ENCODE measurements at regions of chr11 and their contacts with region 1.

Region 1: DNA sequence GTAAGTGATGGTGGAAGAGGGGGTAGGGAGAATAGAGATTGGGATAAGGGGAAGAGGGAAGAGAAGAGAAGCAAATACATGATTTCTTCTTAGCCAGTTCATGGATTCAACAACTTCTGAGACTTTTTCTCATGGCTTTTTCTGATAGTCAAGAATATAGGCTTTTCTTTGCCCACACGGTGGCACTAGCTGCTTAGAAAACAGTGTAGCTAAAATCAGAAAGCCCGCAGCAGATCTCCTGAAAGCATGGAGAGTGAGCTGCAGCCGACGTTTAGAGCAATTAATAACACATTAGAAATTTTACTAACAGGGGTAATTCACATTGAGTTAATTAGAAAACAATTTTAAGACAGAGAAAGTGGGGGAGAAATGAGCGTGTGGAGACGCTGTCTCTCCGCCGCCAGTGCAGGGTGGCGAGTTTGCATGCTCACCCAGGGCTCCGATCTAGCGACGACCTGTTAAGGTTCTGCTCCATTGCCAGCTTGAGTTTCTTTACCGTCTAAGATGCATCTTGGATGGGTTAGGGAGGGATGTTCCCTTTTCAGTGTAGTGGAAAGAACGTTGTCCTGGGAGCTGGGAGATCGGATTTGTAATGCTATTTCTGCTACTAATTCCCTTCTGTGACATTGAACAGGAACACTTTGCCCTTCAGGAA is 3.3 kb upstream of the RAG1 start:
- DNase-seq: peak in 4 of 5 donors; percentile 25 to 54 (median 40)
- ATAC-seq: peak; percentile 58 to 87 (median 76)
- H3K4me3 ChIP-seq: peak overlapping the region in 10 of 12 donors; percentile 11 to 55 (median 46)
- H3K27ac ChIP-seq: no peak overlapping the region
- H3K4me1 ChIP-seq: peaks cover 0 to 7% (median 0%) of the 10 kb centered on the region in 12 donors
- H3K27me3 ChIP-seq: peaks cover 0 to 3% (median 0%) of the 10 kb centered on the region in 9 donors
- CTCF ChIP-seq: peak; percentile 39 to 83 (median 70)
- POLR2A ChIP-seq: no peak

Region 2: DNA sequence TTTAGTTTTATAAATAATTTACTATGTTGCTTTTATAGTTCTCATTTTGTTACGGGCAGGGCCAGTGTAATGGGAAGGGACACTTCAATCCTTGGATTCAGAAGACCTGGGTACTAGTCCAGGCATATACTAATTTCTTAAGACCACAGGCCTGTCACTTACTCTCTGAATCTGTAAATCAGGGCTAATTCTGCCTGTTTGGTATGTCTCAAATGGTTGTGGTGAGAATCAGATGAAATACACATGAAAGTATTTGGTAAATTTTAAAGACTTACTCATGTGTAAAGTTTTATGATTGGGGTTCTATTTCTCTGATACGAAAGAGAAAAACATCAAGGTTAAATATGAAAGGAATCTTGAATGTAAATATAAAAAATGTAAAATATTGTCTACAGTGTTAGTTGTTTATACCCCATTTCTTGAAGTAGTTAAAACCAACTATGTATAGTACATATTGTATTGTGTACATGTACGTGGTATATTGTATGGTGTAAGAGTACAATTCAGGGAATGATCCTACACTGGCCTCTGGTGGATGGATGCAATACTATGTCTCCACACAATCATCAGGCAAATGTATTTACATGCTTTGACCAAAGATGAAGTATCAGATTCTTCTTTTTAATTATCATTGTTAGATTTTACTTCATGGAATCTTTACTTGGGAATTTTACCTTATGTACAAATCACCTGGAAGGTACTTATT is 58.1 kb after region 1 on chr11:
- intact Hi-C with region 1: loop called (anchors 2 to 10 kb)
- DNase-seq: no peak
- ATAC-seq: peak in 2 of 4 donors; percentile 67 to 70
- H3K4me3 ChIP-seq: no peak overlapping the region
- H3K27ac ChIP-seq: no peak overlapping the region
- H3K4me1 ChIP-seq: peaks cover 0 to 25% (median 9%) of the 10 kb centered on the region in 12 donors
- H3K27me3 ChIP-seq: no peaks in the 10 kb centered on the region
- CTCF ChIP-seq: peak; percentile 25 to 66 (median 52)
- POLR2A ChIP-seq: no peak

Region 3: DNA sequence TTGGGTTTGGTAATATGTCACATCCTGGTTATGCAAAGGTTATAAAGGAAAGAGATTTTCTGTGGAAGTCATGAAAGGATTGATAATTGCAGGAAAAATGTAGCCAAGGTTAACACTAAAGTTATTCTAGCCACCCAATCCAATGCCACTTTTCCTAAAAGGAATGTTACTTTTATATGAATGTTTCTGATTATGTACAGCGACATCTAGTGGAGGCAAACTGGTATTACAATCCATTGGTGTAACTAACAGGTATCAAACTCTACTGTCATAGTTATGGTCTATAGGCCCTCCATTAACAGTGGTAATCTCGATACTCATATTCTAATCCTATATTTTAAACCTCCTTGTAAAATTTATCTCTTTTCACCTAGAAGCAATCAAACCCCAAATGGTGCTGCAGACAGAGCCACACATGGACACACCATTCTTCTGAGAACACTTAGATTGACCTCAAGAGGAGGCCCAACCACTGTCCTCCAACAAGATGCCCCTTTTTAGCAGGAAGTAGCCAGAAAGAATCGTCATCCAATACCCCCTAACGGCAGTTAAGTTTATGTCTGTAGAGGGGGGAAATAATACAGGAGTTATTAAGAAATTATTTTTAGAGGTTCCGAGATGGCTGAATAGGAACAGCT is 108.4 kb after region 1 on chr11:
- intact Hi-C with region 1: loop called (anchors 1 to 5 kb)
- DNase-seq: no peak
- ATAC-seq: no peak
- H3K4me3 ChIP-seq: no peak overlapping the region
- H3K27ac ChIP-seq: no peak overlapping the region
- H3K4me1 ChIP-seq: no peaks in the 10 kb centered on the region
- H3K27me3 ChIP-seq: no peaks in the 10 kb centered on the region
- CTCF ChIP-seq: peak; percentile 77 to 97 (median 87)
- POLR2A ChIP-seq: no peak

Region 4: DNA sequence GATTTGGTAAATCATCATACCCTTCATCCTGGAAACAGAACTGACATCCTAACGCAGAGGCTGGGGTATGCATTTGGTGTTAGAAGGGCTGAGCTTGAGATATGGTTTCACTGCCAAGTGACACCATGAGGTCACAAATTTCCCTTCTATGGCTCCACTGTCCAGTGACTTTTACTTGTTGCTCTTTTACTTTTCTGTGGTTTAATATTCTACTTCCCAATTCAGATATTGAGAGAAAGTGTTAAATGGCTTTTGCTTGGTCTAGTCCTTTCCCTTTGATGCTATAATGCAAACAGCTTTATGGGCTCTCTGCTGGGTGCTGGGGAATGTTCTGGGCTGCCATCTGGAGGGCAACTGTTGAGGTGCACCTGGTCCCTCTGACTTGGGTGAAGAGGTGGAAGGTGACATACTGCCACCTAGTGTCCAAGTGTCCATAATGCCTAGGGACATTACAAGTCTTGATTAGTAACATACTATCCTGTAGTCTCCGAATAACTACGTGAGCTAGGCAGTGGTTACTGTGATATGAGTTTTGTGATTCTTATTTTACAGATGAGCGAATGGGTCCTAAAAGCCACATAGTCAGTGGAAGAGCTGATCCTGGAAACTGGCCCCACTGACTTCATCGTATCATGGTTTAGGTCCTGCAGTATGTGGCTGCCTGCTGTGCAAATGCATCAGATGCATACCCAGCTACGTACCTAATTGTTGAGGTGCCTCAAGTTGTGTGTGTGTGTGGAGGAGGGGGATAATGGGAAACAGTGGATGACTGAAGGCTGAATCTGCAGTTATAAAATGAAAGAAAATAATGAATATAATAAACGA is 182.6 kb after region 1 on chr11:
- intact Hi-C with region 1: loop called (anchors 1 to 10 kb)
- DNase-seq: peak; percentile 73 to 85 (median 77)
- ATAC-seq: peak; percentile 86 to 99 (median 96)
- H3K4me3 ChIP-seq: no peak overlapping the region
- H3K27ac ChIP-seq: no peak overlapping the region
- H3K4me1 ChIP-seq: peaks cover 0 to 3% (median 0%) of the 10 kb centered on the region in 12 donors
- H3K27me3 ChIP-seq: peaks cover 0 to 16% (median 0%) of the 10 kb centered on the region in 9 donors
- CTCF ChIP-seq: peak; percentile 88 to 99 (median 96)
- POLR2A ChIP-seq: no peak

Measured in heart left ventricle (tissue), 16 donors.